ENCODE measurements at regions of chr6 and their contacts with region 1.

Region 1: GRCh38 chr6:7328243-7328642 is 15.2 kb upstream of the SSR1 start:
- DNase-seq: no peak
- ATAC-seq: no peak

Region 2: DNA sequence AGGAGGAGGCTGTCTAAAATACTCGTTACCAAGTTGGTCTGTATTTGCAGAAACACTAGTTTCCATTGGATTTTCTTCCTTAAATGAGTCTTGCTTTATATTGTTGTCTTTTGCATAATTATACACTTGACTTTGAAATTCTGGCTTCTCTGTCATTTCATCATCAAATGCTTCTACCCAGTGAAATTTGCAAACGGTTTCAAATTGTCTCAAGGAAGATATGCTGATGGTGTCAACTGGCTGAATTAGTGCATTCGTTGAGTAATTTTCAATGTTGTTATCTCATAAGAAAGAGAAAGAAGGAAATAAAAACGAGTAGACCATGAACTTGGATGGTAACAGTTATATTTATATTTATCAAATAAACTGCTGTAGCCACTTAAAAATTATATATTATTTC is 50.5 kb after region 1 on chr6:
- intact Hi-C with region 1: loop called (anchors 5 kb)
- DNase-seq: no peak
- ATAC-seq: no peak